Panc1 (cell line): ENCODE measurements at regions of chr9 and their contacts with region 1.

Region 1: DNA sequence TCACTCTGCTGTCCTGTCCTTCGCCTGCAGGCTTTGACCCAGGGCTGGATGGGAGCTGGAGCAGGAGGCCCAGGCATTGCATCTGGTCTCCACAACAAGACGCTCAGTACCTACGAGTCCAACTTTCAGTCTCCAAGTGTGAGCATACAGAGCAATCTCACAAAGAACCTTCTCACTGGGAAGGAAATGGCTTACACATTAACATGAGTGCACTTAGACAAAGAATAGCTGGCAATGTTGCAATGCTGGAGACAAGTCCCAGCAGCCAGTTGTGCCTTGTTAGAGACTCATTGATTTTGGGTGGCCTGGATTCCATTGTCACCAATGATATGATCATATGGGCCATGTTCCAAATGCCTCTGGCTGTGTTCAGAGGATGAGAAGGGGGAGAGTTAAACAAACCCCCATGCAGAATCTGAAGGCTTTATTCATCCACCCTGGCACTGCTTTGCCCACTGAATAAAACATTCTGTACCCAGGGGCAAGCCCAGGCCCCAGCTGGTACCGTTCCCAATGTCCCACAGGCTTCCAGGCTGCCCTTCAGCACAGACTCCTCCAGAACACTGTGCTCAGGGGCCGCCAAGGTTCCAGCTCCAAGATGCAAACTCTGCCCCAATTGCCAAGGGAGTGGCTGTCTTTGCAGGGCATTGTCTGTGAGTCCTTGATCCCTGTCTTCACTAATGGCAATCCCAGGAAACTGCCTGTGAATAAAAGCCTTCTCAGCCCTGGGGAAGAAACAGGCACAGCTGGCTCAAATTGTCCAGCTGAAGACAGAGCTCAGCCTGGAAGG is 185.5 kb downstream of the HSD17B3 start:
- DNase-seq: no peak
- ATAC-seq: no peak
- H3K4me3 ChIP-seq: no peak overlapping the region
- H3K27ac ChIP-seq: no peak overlapping the region
- H3K4me1 ChIP-seq: no peaks in the 10 kb centered on the region
- H3K27me3 ChIP-seq: no peaks in the 10 kb centered on the region
- CTCF ChIP-seq: no peak

Region 2: DNA sequence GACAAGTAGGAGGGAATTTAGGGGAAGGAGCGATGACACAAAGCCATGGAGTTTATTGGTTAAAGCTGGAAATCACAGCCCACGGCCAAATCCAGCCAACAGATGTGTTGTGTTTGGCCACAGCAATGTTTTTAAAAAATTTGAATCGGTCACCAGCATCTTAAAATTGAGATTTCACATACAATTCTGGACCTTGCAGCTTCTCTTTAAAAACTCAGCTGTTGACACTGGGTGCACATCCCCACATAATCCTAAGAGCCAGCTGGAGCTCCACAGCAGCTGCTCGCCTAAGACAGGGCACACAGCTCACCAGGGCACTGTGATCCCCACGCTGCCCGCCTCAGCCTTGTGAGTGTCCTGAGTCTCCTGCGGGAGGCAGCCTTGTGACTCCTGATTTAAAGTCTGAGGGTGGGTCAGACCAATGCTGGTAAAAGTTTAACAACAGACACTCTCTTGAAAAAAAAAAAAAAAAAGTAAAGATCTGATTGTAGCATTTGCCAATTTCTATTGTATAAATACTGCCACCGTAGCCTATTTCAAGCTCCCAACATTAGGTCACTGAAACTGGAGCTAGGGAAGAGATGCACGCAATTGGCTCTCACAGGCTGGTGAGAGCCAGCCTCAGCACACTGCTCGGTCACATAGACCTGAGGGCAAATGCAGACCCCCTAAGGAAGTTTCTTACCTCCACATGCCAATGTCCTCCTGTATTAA is 60.7 kb after region 1 on chr9:
- CTCF ChIA-PET with region 1: interaction called, 11 read pairs
- POLR2A ChIA-PET with region 1: no interaction called
- in situ Hi-C with region 1: no loop called
- intact Hi-C with region 1: no loop called
- DNase-seq: no peak
- ATAC-seq: no peak
- H3K4me3 ChIP-seq: no peak overlapping the region
- H3K27ac ChIP-seq: no peak overlapping the region
- H3K4me1 ChIP-seq: no peaks in the 10 kb centered on the region
- H3K27me3 ChIP-seq: peaks cover 6% of the 10 kb centered on the region
- CTCF ChIP-seq: no peak